ENCODE measurements at regions of chr20 and their contacts with region 1.

Region 1: DNA sequence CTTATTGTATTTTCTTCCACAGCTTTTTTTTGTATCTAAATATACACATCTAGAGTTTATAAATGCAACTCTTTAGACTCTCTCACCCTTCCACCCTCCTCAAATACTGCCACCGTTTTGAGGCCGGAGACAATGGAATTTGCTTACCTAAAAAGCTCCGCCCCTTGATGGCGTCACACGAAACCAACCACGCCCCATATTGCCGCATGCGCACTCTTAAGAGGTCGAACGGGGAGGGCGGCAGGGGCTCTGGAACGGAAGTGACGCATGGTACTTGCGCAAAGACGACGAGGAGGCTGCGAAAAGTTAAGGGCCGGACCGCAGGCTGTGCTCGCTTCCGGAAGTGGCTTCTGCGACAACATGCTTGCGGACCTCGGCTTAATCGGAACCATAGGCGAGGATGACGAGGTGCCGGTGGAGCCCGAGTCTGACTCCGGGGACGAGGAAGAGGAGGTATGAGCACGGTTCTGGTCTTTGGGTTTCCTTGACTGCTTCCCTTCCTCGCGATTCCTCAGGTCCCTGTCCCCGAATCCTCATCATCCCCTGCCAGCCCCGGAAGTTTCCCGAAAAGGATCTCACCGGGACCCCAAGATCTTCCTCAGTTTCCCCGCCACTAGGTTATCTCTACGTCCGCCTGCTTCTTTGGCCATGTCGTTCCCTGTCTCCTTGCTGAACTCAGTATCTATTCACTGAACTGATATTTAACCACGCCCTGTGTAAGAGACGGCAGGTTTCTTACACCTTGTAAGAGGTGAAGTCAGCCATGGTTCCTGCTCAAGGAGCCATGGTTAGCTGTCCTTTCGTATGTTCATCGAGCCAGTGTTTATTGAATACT is at the start of gene DDX27:
- DNase-seq: peak; percentile 98 to 99
- H3K4me3 ChIP-seq: peak within 1 kb of the TSS; percentile 76 to 89
- H3K27ac ChIP-seq: peak within 1 kb of the TSS; percentile 86 to 92
- H3K4me1 ChIP-seq: no peaks in the 10 kb centered on the region
- H3K27me3 ChIP-seq: no peaks in the 10 kb centered on the region
- CTCF ChIP-seq: peak in 1 of 4 experiments; percentile 11
- POLR2A ChIP-seq: peak; percentile 84 to 94
- total RNA-seq, gene DDX27: 11.8 to 35.8 (median 26.5) TPM

Region 2: GRCh38 chr20:49132995-49133478 is 86.3 kb before region 1 on chr20:
- intact Hi-C with region 1: loop called (anchors 5 kb)
- DNase-seq: peak in 1 of 2 donors; percentile 25
- H3K4me3 ChIP-seq: no peak overlapping the region
- H3K27ac ChIP-seq: peak overlapping the region; percentile 20 to 36
- H3K4me1 ChIP-seq: no peaks in the 10 kb centered on the region
- H3K27me3 ChIP-seq: no peaks in the 10 kb centered on the region
- CTCF ChIP-seq: peak; percentile 42 to 77 (median 65)
- POLR2A ChIP-seq: no peak

Measured in uterus (tissue), 4 donors.